Caco-2 (cell line): ENCODE measurements at regions of chr3 and their contacts with region 1.

Region 1: GRCh38 chr3:6088433-6088832 is 772.5 kb upstream of the GRM7 start:
- DNase-seq: no peak
- H3K4me3 ChIP-seq: no peak overlapping the region
- H3K4me3 Mint-ChIP-seq: no peak overlapping the region
- H3K27ac Mint-ChIP-seq: no peak overlapping the region
- H3K4me1 ChIP-seq: no peaks in the 10 kb centered on the region
- H3K4me1 Mint-ChIP-seq: no peaks in the 10 kb centered on the region
- H3K27me3 ChIP-seq: no peaks in the 10 kb centered on the region
- H3K27me3 Mint-ChIP-seq: no peaks in the 10 kb centered on the region
- CTCF ChIP-seq: peak; percentile 13 to 31

Region 2: GRCh38 chr3:5806192-5806591 is 282.2 kb before region 1 on chr3:
- CTCF ChIA-PET with region 1: no interaction called
- POLR2A ChIA-PET with region 1: no interaction called
- intact Hi-C with region 1: loop called (anchors 2 kb)
- DNase-seq: peak in 1 of 2 experiments; percentile 8
- H3K4me3 ChIP-seq: no peak overlapping the region
- H3K4me3 Mint-ChIP-seq: no peak overlapping the region
- H3K27ac Mint-ChIP-seq: no peak overlapping the region
- H3K4me1 ChIP-seq: no peaks in the 10 kb centered on the region
- H3K4me1 Mint-ChIP-seq: no peaks in the 10 kb centered on the region
- H3K27me3 ChIP-seq: no peaks in the 10 kb centered on the region
- H3K27me3 Mint-ChIP-seq: peaks cover 4% of the 10 kb centered on the region
- CTCF ChIP-seq: peak; percentile 45 to 55

Region 3: GRCh38 chr3:6062261-6063187 is 25.9 kb before region 1 on chr3:
- CTCF ChIA-PET with region 1: no interaction called
- POLR2A ChIA-PET with region 1: no interaction called
- intact Hi-C with region 1: no loop called
- DNase-seq: no peak
- H3K4me3 ChIP-seq: no peak overlapping the region
- H3K4me3 Mint-ChIP-seq: no peak overlapping the region
- H3K27ac Mint-ChIP-seq: no peak overlapping the region
- H3K4me1 ChIP-seq: peaks cover 16% of the 10 kb centered on the region
- H3K4me1 Mint-ChIP-seq: peaks cover 22% of the 10 kb centered on the region
- H3K27me3 ChIP-seq: no peaks in the 10 kb centered on the region
- H3K27me3 Mint-ChIP-seq: no peaks in the 10 kb centered on the region
- CTCF ChIP-seq: no peak

Region 4: GRCh38 chr3:6074952-6075351 is 13.5 kb before region 1 on chr3:
- CTCF ChIA-PET with region 1: no interaction called
- POLR2A ChIA-PET with region 1: no interaction called
- intact Hi-C with region 1: no loop called
- DNase-seq: no peak
- H3K4me3 ChIP-seq: no peak overlapping the region
- H3K4me3 Mint-ChIP-seq: no peak overlapping the region
- H3K27ac Mint-ChIP-seq: no peak overlapping the region
- H3K4me1 ChIP-seq: peaks cover 9% of the 10 kb centered on the region
- H3K4me1 Mint-ChIP-seq: peaks cover 13% of the 10 kb centered on the region
- H3K27me3 ChIP-seq: no peaks in the 10 kb centered on the region
- H3K27me3 Mint-ChIP-seq: no peaks in the 10 kb centered on the region
- CTCF ChIP-seq: no peak